Upper lobe of right lung (tissue), 1 donor: ENCODE measurements at regions of chr2 and their contacts with region 1.

Region 1: DNA sequence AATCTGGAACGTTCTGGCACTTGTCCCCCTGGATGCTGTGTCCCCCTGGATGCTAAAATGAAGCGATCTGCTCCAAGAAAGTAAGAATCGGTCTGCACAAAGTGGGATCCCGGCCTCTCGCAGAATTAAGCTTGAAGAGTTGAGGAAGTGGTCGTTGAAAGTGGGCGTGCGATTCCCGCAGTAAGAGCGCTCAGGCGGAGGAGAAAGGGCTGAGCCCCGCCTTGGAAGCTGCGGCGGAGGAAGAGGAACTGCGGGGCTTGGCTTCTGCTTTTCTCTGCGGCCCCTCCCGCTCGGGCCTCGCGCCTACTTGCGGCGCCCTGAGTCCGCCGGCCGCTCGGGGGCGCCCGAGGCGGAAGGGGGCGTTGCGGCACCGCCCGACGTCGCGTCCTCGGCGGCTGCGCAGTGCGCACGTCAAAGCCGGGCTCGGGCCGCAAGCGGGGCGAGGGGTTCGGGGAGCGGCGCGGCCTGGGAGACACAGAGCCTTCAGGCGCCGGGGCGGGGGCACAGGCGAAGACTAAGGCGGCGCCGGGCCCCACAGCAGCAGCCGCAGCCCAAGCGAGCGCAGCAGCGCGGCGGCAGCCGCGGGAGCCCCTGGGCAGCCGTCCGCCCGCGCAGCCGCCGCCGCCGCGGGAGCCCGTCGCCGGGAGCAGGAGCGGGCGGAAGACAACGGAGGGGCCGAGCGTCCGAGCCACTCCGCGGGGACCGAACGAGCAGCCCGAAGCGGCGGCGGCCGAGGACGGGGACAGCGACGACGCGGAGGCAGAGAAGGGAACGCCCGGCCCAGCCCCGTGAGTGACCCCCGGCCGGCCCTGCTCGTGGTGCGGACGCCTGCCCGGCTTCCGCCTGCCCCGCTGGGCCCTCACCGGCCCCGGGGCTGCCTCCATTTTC is at the start of gene CAB39:
- DNase-seq: peak; percentile 94
- ATAC-seq: peak; percentile 97
- H3K4me3 ChIP-seq: peak within 1 kb of the TSS; percentile 91
- H3K27ac ChIP-seq: peak within 1 kb of the TSS; percentile 95
- H3K4me1 ChIP-seq: peaks cover 39% of the 10 kb centered on the region
- H3K27me3 ChIP-seq: no peaks in the 10 kb centered on the region
- CTCF ChIP-seq: peak; percentile 85
- total RNA-seq, gene CAB39: 78.9 TPM

Region 2: GRCh38 chr2:229800997-229801754 is 911.5 kb before region 1 on chr2:
- intact Hi-C with region 1: no loop called
- DNase-seq: no peak
- ATAC-seq: peak; percentile 75
- H3K4me3 ChIP-seq: no peak overlapping the region
- H3K27ac ChIP-seq: no peak overlapping the region
- H3K4me1 ChIP-seq: no peaks in the 10 kb centered on the region
- H3K27me3 ChIP-seq: no peaks in the 10 kb centered on the region
- CTCF ChIP-seq: peak; percentile 77

Region 3: GRCh38 chr2:230809677-230810251 is 97.1 kb after region 1 on chr2:
- intact Hi-C with region 1: loop called (anchors 10 kb)
- DNase-seq: no peak
- ATAC-seq: no peak
- H3K4me3 ChIP-seq: no peak overlapping the region
- H3K27ac ChIP-seq: no peak overlapping the region
- H3K4me1 ChIP-seq: no peaks in the 10 kb centered on the region
- H3K27me3 ChIP-seq: no peaks in the 10 kb centered on the region
- CTCF ChIP-seq: no peak